Stomach (tissue), 19 donors: ENCODE measurements at regions of chr20 and their contacts with region 1.

Region 1: GRCh38 chr20:45377269-45377668 is 856 bp downstream of the TP53TG5 start:
- DNase-seq: no peak
- H3K4me3 ChIP-seq: no peak overlapping the region
- H3K27ac ChIP-seq: no peak overlapping the region
- H3K4me1 ChIP-seq: peaks cover 14 to 19% (median 18%) of the 10 kb centered on the region in 4 donors
- H3K27me3 ChIP-seq: no peaks in the 10 kb centered on the region
- CTCF ChIP-seq: no peak
- EP300 ChIP-seq: no peak
- POLR2A ChIP-seq: no peak

Region 2: DNA sequence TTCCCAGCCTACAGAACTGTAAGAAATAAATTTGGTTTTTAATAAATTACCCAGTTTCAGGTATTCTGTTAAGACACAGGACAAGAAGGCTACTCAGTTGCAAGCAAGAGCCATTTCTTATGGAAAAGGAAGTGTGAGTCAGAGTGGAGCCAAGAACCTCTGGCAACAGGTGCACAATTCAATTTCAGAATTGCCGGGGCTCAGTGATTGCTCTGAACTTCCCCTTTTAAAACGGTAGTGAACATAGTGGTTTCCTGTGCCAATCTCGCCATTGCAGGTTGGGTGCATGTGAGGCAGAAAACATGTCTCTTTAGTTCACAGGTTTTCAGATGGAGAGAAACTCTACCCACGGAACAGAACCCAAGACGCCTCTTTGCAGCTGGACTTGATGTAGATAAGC is 55.0 kb after region 1 on chr20:
- intact Hi-C with region 1: loop called (anchors 5 kb)
- DNase-seq: peak in 1 of 2 donors; percentile 17
- H3K4me3 ChIP-seq: no peak overlapping the region
- H3K27ac ChIP-seq: no peak overlapping the region
- H3K4me1 ChIP-seq: peaks cover 0 to 22% (median 8%) of the 10 kb centered on the region in 4 donors
- H3K27me3 ChIP-seq: no peaks in the 10 kb centered on the region
- CTCF ChIP-seq: no peak
- EP300 ChIP-seq: no peak
- POLR2A ChIP-seq: no peak